HepG2 (cell line): ENCODE measurements at regions of chr18 and their contacts with region 1.

Region 1: GRCh38 chr18:24878289-24878688 is 417.9 kb downstream of the HRH4 start:
- DNase-seq: peak; percentile 7
- ATAC-seq: no peak; the same call in 2 of the 3 replicates
- H3K4me3 ChIP-seq: no peak overlapping the region
- H3K27ac ChIP-seq: no peak overlapping the region
- H3K4me1 ChIP-seq: no peaks in the 10 kb centered on the region
- H3K27me3 ChIP-seq: no peaks in the 10 kb centered on the region
- CTCF ChIP-seq: peak; percentile 51
- EP300 ChIP-seq: no peak
- POLR2A ChIP-seq: no peak
- RAD21 ChIP-seq: no peak

Region 2: GRCh38 chr18:24987303-24988252 is 109.3 kb after region 1 on chr18:
- CTCF ChIA-PET with region 1: no interaction called
- POLR2A ChIA-PET with region 1: no interaction called
- in situ Hi-C with region 1: loop called (anchors 25 kb)
- intact Hi-C with region 1: no loop called
- DNase-seq: no peak
- ATAC-seq: no peak
- H3K4me3 ChIP-seq: no peak overlapping the region
- H3K27ac ChIP-seq: no peak overlapping the region
- H3K4me1 ChIP-seq: no peaks in the 10 kb centered on the region
- H3K27me3 ChIP-seq: no peaks in the 10 kb centered on the region; a peak in 2 of 5 replicates
- CTCF ChIP-seq: no peak
- EP300 ChIP-seq: no peak
- POLR2A ChIP-seq: no peak
- RAD21 ChIP-seq: no peak